ENCODE measurements at regions of chr2 and their contacts with region 1.

Region 1: DNA sequence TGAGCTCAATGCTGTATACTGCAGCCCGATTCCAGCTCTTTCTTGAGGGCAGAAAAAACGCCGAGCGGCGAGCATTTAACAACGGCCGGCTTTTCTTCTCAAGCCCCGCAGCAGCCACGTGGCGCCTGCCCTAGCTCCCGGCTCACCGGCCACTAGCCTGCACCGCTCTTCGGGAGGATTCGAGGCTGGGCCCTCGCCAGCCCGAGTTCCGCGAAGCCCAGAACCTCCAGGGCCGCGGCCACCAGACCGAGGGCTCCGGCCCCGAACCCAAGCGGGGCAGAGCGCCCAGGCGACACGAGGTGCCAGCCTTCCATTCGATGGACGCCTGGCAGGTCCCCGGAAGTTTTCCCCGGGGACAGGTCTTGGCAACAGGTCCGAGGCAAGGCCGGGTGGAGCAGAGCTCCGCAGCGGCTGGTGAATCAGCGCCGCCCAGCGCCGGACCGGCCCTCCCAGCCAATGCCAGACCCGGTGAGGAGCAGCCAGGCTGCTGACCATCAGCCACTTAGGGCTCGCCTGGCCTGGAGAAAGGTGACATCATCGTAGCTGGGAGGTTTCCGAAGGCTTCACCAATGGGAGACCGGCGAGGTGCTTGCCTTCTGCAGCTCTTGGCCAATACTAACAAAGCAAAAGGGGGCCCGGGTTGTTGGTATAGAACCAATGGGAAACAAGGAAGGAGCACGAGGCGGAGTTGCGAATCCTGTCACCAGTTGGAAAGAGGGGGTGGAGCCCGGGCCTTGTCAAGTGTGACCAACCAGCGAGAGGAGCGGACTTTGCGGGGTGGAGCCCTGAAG is 544 bp upstream of the MXD1 start:
- DNase-seq: peak; percentile 100
- H3K4me3 Mint-ChIP-seq: peak overlapping the region; percentile 82
- H3K27ac Mint-ChIP-seq: peak overlapping the region; percentile 89
- H3K4me1 Mint-ChIP-seq: peaks cover 40% of the 10 kb centered on the region
- H3K27me3 Mint-ChIP-seq: no peaks in the 10 kb centered on the region

Region 2: DNA sequence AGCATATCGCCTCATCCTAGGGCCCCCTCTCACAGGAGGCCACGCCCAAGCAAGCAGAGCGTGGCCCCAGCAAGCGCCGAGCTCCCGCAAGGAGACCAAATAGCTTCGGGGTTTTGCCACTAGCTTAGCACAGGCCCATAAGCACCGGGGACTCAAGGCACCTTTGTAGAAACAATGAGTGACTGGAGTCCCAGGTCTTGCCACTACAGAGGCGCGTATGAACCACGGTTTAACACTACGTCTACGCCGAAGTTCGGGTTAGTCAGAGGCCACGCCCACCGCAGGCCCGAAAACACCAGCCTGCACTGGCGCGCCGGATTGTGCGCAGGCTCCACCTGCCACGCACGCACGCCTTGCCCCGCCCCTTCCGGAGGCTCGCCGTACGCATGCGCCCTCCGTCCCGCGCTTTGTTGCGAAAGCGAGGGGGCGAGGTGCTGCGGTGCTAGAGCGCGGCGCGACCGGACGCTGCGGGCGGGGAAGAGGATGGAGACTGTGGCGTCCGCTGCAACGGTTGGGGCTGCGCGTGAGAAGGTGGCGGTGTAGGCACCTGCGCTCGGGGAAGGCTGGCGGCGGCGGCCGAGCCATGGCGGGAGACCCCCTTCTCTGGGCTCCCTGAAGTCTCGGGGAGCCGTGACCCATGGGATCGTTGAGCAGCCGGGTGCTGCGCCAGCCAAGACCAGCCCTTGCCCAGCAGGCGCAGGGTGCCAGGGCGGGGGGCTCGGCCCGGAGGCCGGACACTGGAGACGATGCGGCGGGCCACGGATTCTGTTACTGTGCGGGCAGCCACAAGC is 84.9 kb before region 1 on chr2 and contains the start of gene GMCL1:
- CTCF ChIA-PET with region 1: no interaction called
- POLR2A ChIA-PET with region 1: no interaction called
- intact Hi-C with region 1: loop called (anchors 1 kb)
- DNase-seq: peak; percentile 99
- H3K4me3 Mint-ChIP-seq: peak within 1 kb of the TSS; percentile 81
- H3K27ac Mint-ChIP-seq: peak within 1 kb of the TSS; percentile 92
- H3K4me1 Mint-ChIP-seq: peaks cover 40% of the 10 kb centered on the region
- H3K27me3 Mint-ChIP-seq: no peaks in the 10 kb centered on the region
- total RNA-seq, gene GMCL1: 20.6 to 22.1 TPM

Region 3: DNA sequence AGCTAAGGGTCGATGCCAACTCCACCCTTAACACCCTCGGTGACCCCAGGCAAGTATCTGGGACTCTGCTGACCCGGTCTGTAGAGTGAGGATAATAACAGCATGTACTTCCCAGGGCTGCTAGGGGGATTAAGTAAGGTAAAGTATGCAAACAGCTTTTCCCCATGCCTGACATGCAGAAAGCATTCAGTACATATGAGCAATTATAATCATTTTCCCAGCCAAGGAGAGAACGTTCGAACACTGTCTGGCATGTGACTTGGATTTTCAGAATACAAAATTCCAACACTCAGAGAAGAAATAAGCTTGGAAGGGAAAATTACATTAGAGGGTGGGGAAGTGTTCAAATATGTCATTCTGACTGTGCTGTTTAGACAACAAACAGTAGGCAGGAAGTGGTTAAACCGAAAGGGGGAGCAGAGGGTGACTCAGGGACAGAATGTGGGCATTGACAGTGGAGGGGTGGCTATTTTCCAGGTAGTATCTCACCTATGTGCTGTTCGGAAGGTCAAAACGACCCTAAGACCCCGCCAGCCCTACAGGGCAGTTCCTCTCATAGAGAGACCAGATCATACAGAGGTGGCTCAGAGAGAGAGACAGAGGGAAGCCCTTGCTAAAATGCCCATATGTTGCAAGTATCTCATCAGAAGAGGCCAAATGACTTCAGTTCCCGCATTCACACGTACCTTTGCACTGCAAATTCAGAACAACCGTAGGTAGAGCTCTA is 32.1 kb after region 1 on chr2:
- CTCF ChIA-PET with region 1: no interaction called
- POLR2A ChIA-PET with region 1: interaction called, 6 read pairs
- intact Hi-C with region 1: loop called (anchors 2 kb)
- DNase-seq: peak; percentile 80
- H3K4me3 Mint-ChIP-seq: no peak overlapping the region
- H3K27ac Mint-ChIP-seq: peak overlapping the region; percentile 85
- H3K4me1 Mint-ChIP-seq: peaks cover 36% of the 10 kb centered on the region
- H3K27me3 Mint-ChIP-seq: no peaks in the 10 kb centered on the region

Region 4: GRCh38 chr2:70094978-70095719 is 180.8 kb after region 1 on chr2:
- CTCF ChIA-PET with region 1: interaction called, 12 read pairs
- POLR2A ChIA-PET with region 1: interaction called, 11 read pairs
- intact Hi-C with region 1: no loop called
- DNase-seq: peak; percentile 69
- H3K4me3 Mint-ChIP-seq: peak overlapping the region; percentile 64
- H3K27ac Mint-ChIP-seq: peak overlapping the region; percentile 91
- H3K4me1 Mint-ChIP-seq: peaks cover 53% of the 10 kb centered on the region
- H3K27me3 Mint-ChIP-seq: no peaks in the 10 kb centered on the region

Region 5: GRCh38 chr2:70142590-70143313 is 228.4 kb after region 1 on chr2:
- CTCF ChIA-PET with region 1: interaction called, 50 read pairs
- POLR2A ChIA-PET with region 1: interaction called, 36 read pairs
- intact Hi-C with region 1: loop called (anchors 1 kb)
- DNase-seq: peak; percentile 100
- H3K4me3 Mint-ChIP-seq: peak overlapping the region; percentile 89
- H3K27ac Mint-ChIP-seq: peak overlapping the region; percentile 96
- H3K4me1 Mint-ChIP-seq: peaks cover 62% of the 10 kb centered on the region
- H3K27me3 Mint-ChIP-seq: no peaks in the 10 kb centered on the region

Region 6: GRCh38 chr2:70301344-70302194 is 387.2 kb after region 1 on chr2 and contains the start of gene FAM136A:
- CTCF ChIA-PET with region 1: interaction called, 28 read pairs
- POLR2A ChIA-PET with region 1: interaction called, 3 read pairs
- intact Hi-C with region 1: loop called (anchors 1 kb)
- DNase-seq: peak; percentile 93
- H3K4me3 Mint-ChIP-seq: peak within 1 kb of the TSS; percentile 86
- H3K27ac Mint-ChIP-seq: peak within 1 kb of the TSS; percentile 92
- H3K4me1 Mint-ChIP-seq: peaks cover 27% of the 10 kb centered on the region
- H3K27me3 Mint-ChIP-seq: no peaks in the 10 kb centered on the region
- total RNA-seq, gene FAM136A: 48.0 to 49.8 TPM

Measured in activated CD4-positive, alpha-beta memory T cell treated with anti-CD3 and anti-CD28 coated beads for 36 hours (primary cell).